Caki2 (cell line): ENCODE measurements at regions of chr19 and their contacts with region 1.

Region 1: DNA sequence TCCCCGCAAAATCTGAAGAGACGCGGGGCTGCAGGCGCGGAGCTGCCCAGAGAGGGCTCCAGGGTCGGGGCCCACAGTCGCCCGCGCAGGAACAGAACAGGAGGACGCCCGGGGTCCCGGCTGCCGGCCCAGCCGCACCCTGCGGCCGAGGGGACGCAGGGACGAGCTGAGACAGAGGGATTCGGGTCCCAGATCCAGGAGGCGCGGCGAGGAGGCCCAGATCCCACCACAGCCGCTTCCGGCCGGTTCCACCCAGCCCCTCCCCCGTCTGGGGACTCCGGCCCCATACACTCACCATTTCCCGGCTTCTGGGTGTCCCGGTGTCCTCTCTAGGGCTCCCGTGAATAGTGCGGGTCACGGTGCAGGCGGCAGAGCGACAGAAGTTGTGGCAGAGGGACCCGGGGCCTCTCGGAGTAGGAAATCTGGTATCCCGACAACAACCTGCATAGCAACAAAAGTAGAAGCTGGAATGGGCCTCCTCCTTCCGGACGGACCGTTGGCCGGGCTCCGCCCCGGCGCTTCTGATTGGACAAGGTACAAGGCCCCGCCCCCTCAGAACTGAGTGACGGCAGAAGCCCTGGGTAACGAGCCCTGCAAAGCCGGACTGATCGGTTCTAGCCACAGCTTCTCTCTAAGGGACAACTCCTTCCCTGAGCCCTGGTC is at the start of gene ZNF20:
- DNase-seq: peak; percentile 96
- total RNA-seq, gene ZNF20: 3.4 and 20.8 TPM in 2 replicates

Region 2: GRCh38 chr19:11798391-11799330 is 341.4 kb before region 1 on chr19 and contains the start of gene ZNF491:
- in situ Hi-C with region 1: no loop called
- DNase-seq: peak; percentile 54
- total RNA-seq, gene ZNF491: 0.41 TPM in 1 of 2 replicates, not detected in the other

Region 3: GRCh38 chr19:11813703-11814028 is 326.4 kb before region 1 on chr19:
- in situ Hi-C with region 1: no loop called
- DNase-seq: no peak

Region 4: DNA sequence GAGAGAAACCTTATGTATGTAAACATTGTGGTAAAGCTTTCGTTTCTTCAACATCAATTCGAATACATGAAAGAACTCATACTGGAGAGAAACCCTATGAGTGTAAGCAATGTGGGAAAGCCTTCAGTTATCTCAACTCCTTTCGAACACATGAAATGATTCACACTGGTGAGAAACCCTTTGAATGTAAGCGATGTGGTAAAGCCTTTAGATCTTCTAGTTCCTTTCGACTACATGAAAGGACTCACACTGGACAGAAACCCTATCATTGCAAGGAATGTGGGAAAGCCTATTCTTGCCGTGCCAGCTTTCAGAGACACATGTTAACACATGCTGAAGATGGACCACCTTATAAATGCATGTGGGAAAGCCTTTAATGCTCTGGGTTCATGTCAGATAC is 47.6 kb after region 1 on chr19:
- in situ Hi-C with region 1: loop called (anchors 10 kb)
- DNase-seq: no peak

Region 5: DNA sequence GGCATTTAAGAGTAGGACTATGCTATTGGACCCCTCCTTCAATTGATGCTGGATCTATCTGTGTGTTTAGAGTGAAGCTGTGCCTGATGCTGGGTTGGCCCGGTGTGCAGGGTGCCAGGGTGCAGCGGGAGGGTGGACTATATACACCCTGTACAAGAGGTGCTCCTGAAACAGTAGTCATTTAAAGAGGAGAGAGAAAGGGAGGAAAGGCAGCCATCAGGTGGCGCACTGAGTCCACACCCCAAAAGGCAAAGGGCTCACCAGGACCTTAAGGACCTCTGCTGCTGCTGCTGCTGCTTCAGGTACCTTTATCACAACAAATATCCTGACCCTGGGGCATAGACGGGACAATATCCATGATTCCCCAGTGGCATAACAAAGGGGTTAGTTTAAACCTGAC is 62.2 kb after region 1 on chr19:
- in situ Hi-C with region 1: no loop called
- DNase-seq: no peak

Region 6: GRCh38 chr19:12224676-12225075 is 84.7 kb after region 1 on chr19:
- in situ Hi-C with region 1: no loop called
- DNase-seq: no peak